Heart left ventricle (tissue), 16 donors: ENCODE measurements at regions of chr11 and their contacts with region 1.

Region 1: GRCh38 chr11:46352063-46352841 is 5.0 kb downstream of the DGKZ start:
- DNase-seq: peak in 4 of 5 donors; percentile 60 to 82 (median 66)
- ATAC-seq: peak; percentile 17 to 57 (median 34)
- H3K4me3 ChIP-seq: peak overlapping the region in 9 of 12 donors; percentile 5 to 39 (median 26)
- H3K27ac ChIP-seq: peak overlapping the region in 11 of 12 donors; percentile 33 to 86 (median 68)
- H3K4me1 ChIP-seq: peaks cover 5 to 90% (median 50%) of the 10 kb centered on the region in 12 donors
- H3K27me3 ChIP-seq: no peaks in the 10 kb centered on the region
- CTCF ChIP-seq: peak; percentile 90 to 98 (median 94)
- POLR2A ChIP-seq: no peak

Region 2: DNA sequence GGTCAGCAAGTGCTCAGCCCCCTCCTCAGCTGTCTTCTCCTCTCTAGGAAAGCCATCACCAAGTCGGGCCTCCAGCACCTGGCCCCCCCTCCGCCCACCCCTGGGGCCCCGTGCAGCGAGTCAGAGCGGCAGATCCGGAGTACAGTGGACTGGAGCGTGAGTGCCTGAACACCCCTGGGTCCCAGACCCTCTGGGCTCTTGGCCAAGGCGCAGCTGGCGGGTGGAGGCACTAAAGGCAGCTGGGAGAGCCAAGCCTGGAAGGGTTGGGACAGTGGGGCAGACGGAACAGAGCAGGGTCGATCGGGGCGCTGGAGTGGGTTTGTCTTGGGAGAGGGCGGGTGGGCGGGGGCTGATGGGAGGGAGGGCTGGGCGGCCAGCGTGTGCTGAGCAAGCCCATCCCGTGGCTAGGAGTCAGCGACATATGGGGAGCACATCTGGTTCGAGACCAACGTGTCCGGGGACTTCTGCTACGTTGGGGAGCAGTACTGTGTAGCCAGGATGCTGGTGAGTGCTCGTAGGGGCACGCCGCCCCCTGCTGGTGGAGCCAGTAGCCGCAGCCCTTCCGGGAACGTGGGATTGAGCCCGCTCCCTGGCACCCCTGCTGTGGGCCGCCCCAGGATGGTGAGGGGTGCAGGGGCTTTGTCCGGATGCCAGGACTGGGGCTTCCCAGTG is 15.1 kb after region 1 on chr11:
- intact Hi-C with region 1: loop called in 4 of 10 experiments (anchors 2 kb)
- DNase-seq: peak; percentile 68 to 87 (median 74)
- ATAC-seq: peak; percentile 27 to 59 (median 36)
- H3K4me3 ChIP-seq: peak overlapping the region in 1 of 12 donors; percentile 7
- H3K27ac ChIP-seq: peak overlapping the region in 5 of 12 donors; percentile 0 to 46 (median 24)
- H3K4me1 ChIP-seq: peaks cover 10 to 55% (median 42%) of the 10 kb centered on the region in 12 donors
- H3K27me3 ChIP-seq: no peaks in the 10 kb centered on the region
- CTCF ChIP-seq: peak; percentile 88 to 96 (median 92)
- POLR2A ChIP-seq: no peak

Region 3: DNA sequence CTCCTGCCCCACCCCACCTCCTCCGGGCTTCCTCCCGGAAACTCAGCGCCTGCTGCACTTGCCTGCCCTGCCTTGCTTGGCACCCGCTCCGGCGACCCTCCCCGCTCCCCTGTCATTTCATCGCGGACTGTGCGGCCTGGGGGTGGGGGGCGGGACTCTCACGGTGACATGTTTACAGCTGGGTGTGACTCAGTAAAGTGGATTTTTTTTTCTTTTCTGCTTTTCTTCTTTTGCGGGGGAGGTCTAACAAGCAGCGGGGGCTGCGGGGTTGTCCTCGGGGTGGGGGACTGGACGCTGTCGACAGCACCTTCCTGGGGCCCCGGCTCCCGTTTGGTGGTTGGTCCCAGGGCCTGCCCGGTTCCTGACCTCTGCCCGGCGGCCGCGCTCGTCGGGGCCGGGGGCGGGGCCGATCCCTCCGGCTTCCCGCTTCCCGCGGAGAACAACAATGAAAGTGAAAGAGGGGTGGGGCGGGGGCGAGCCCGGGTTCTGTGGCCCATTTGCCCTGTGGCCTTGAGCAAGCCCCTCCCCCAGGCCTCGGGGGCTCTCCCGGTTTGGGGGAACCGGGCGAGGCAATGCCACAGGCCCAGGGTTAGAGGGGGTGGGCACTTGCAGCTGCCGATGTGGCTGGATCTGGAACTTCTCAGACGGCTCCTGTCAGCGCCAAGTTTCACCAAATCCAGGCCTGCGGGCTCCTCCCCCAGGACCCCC is 28.2 kb after region 1 on chr11:
- intact Hi-C with region 1: no loop called
- DNase-seq: peak; percentile 75 to 83 (median 82)
- ATAC-seq: peak; percentile 12 to 66 (median 33)
- H3K4me3 ChIP-seq: peak overlapping the region; percentile 40 to 78 (median 72)
- H3K27ac ChIP-seq: peak overlapping the region; percentile 14 to 88 (median 80)
- H3K4me1 ChIP-seq: peaks cover 0 to 32% (median 16%) of the 10 kb centered on the region in 12 donors
- H3K27me3 ChIP-seq: peaks cover 0 to 13% (median 0%) of the 10 kb centered on the region in 9 donors
- CTCF ChIP-seq: no peak
- POLR2A ChIP-seq: no peak